Left colon (tissue), 2 donors: ENCODE measurements at regions of chr9 and their contacts with region 1.

Region 1: GRCh38 chr9:71604197-71605063 is 163.9 kb downstream of the CEMIP2 start:
- DNase-seq: peak; percentile 73 to 84
- ATAC-seq: peak; percentile 93

Region 2: DNA sequence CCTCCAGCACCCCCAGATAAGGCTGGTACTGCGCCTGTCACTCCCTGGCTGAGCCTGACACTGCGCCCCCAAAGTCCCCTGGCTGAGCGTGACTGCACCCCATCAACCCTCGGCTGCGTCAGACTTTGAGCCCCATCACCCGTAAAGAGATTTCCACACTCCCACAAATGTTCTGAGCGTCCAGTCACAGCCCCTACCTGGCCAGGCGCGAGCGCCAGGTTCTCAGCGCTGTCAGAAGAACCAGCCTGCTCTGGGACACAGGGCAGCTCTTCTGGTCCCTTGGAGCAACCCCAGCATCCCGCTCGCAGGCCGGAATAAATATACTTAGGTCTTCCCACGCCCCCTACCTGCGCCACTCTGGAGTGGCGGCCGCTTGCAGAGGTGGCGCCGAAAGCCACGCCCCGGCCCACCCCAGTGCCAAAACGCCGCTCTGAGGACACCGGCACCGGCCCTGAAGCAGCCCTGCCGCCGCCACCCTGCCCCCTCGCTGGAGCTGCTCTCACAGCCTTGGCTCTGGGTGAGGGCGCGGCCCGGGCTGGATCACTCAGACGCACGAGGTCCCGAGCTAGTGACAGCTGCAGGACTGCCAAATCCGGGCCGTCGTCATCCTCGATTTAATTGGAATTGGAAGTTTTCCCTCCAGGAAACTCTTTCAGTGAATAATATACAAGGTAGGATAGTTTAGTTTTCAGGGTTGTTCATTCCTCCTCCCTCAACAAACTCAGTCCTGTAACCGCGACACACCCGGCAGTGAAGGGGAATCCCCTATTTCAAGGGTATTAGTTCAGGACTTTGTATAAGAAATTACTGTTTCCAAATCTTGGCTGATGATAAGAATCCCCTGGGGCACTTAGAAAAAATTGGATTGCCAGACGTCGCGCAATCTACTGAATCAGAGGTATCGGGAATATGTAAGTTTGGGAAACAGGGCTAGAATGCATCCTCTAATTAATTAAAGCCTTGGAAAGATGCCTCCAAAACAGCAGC is 165.0 kb after region 1 on chr9:
- intact Hi-C with region 1: loop called in 1 of 2 experiments (anchors 5 kb)
- DNase-seq: peak; percentile 89 to 90
- ATAC-seq: peak; percentile 55